ENCODE measurements at regions of chr3 and their contacts with region 1.

Region 1: DNA sequence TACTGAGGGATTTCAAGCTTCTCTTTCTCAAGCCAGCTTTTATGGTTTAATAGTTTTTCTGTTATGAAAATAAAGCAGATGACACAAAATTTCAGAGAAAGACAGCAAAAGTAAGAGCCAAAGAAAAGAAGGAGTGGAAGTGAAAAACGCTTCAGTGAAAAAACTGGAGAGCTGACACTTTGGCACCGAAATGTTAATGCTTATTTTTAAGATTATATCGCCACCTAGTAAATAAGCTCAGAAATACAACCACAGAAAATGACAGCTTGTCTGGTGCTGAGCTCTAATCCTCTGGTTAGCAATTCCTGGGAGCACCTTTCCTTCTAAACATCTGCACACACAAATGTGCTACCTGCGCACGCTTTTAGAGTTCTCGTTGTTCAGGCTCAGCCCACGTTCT is 101.6 kb downstream of the ZPLD1 start:
- DNase-seq: no peak
- H3K4me3 Mint-ChIP-seq: no peak overlapping the region
- H3K27ac Mint-ChIP-seq: no peak overlapping the region
- H3K4me1 Mint-ChIP-seq: peaks cover 3% of the 10 kb centered on the region
- H3K27me3 Mint-ChIP-seq: peaks cover 3% of the 10 kb centered on the region

Region 2: GRCh38 chr3:101695779-101696372 is 840.6 kb before region 1 on chr3:
- CTCF ChIA-PET with region 1: no interaction called
- POLR2A ChIA-PET with region 1: no interaction called
- intact Hi-C with region 1: loop called (anchors 2 kb)
- DNase-seq: no peak
- H3K4me3 Mint-ChIP-seq: no peak overlapping the region
- H3K27ac Mint-ChIP-seq: no peak overlapping the region
- H3K4me1 Mint-ChIP-seq: peaks cover 8% of the 10 kb centered on the region
- H3K27me3 Mint-ChIP-seq: no peaks in the 10 kb centered on the region

Region 3: DNA sequence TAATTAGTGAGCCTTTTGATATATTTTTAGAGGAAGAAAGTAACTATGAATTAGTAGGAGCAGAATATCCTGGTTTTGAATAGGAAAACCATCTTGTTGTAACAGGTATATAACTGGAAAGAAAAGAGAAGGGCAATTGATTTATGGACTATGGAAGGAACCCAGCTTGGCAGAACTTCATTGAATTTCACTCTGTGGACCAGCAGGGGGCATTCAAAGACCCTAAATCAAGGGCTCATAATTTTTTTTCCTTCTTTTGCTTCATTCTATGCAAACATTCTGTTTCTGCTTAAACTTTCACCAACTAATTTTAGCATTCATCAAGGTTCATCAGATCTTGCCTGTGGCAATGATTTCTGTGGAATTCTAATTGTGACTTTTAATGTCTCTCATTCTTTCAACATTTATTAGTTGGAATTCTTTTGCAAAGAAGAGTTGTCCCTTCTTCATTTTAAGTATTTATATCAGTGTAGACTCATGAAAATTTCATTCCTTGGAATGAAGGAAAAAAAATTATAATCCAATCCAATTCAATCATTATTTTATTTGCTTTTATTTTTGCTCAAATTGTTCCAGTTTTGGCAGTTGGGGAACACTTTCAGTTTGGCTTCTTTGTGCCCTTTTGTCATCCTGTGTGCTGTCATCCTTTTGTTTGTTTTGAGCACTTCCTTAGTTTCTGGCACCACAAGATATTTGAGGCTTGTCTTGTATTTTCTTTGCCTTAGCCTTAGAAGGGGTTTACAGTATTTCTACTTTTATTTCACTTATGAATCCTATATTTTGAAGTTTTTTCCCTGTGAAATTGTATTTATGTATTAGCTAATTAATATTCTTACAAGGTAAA is 727.1 kb before region 1 on chr3:
- CTCF ChIA-PET with region 1: interaction called, 12 read pairs
- POLR2A ChIA-PET with region 1: no interaction called
- intact Hi-C with region 1: loop called (anchors 2 kb)
- DNase-seq: peak; percentile 31
- H3K4me3 Mint-ChIP-seq: no peak overlapping the region
- H3K27ac Mint-ChIP-seq: no peak overlapping the region
- H3K4me1 Mint-ChIP-seq: peaks cover 43% of the 10 kb centered on the region
- H3K27me3 Mint-ChIP-seq: no peaks in the 10 kb centered on the region

Region 4: GRCh38 chr3:102235679-102236078 is 300.8 kb before region 1 on chr3:
- CTCF ChIA-PET with region 1: interaction called, 171 read pairs
- POLR2A ChIA-PET with region 1: no interaction called
- intact Hi-C with region 1: no loop called
- DNase-seq: no peak
- H3K4me3 Mint-ChIP-seq: no peak overlapping the region
- H3K27ac Mint-ChIP-seq: no peak overlapping the region
- H3K4me1 Mint-ChIP-seq: no peaks in the 10 kb centered on the region
- H3K27me3 Mint-ChIP-seq: no peaks in the 10 kb centered on the region